ENCODE measurements at regions of chr13 and their contacts with region 1.

Region 1: DNA sequence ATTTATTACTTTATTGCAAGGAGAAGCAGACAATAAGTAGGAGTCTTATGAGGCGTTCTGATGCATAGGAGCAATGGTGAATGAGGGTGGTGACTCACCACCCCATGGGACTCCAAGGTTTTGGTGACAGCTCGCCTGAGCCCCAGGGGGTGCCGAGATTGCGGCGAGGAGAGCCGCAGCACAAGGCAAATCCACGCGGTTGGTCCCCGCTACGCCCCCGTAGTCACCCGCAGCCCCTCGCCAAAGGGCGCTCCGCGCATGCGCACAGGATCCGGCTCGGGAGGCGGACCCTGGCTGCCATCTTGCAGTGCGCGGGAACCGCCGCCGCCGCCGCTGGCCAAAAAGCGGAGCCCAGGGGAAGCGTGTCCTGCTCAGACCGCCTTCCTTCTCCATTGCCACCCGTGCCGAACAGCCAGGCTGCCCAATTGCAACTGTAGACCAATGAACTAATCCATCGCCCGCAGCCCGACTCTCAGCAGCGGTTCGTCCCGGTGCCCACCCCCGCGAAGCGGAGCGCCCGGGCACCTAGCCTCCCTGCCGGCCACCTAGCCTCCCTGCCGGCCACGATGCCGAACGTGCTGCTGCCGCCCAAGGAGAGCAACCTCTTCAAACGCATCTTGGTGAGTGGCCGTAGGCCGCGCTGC is at the start of gene NAA16:
- DNase-seq: peak; percentile 98
- ATAC-seq: peak; percentile 92
- H3K4me3 Mint-ChIP-seq: peak within 1 kb of the TSS; percentile 96
- H3K27ac Mint-ChIP-seq: peak within 1 kb of the TSS; percentile 90
- H3K4me1 Mint-ChIP-seq: peaks cover 44% of the 10 kb centered on the region
- H3K27me3 Mint-ChIP-seq: no peaks in the 10 kb centered on the region
- CTCF ChIP-seq: no peak
- total RNA-seq, gene NAA16: 18.5 and 21.4 TPM in 2 replicates

Region 2: GRCh38 chr13:39655569-39656324 is 1655.3 kb before region 1 on chr13 and contains the start of gene COG6:
- CTCF ChIA-PET with region 1: no interaction called
- POLR2A ChIA-PET with region 1: no interaction called
- intact Hi-C with region 1: loop called (anchors 10 kb)
- DNase-seq: peak; percentile 99
- ATAC-seq: peak; percentile 91
- H3K4me3 Mint-ChIP-seq: peak within 1 kb of the TSS; percentile 91
- H3K27ac Mint-ChIP-seq: peak within 1 kb of the TSS; percentile 85
- H3K4me1 Mint-ChIP-seq: peaks cover 26% of the 10 kb centered on the region
- H3K27me3 Mint-ChIP-seq: peaks cover 2% of the 10 kb centered on the region
- CTCF ChIP-seq: no peak
- total RNA-seq, gene COG6: 28.9 and 29.6 TPM in 2 replicates

Region 3: GRCh38 chr13:40922437-40923040 is 388.5 kb before region 1 on chr13:
- CTCF ChIA-PET with region 1: no interaction called
- POLR2A ChIA-PET with region 1: no interaction called
- intact Hi-C with region 1: loop called (anchors 5 kb)
- DNase-seq: no peak
- ATAC-seq: no peak
- H3K4me3 Mint-ChIP-seq: peak overlapping the region; percentile 66
- H3K27ac Mint-ChIP-seq: peak overlapping the region; percentile 69
- H3K4me1 Mint-ChIP-seq: peaks cover 24% of the 10 kb centered on the region
- H3K27me3 Mint-ChIP-seq: no peaks in the 10 kb centered on the region
- CTCF ChIP-seq: no peak

Region 4: GRCh38 chr13:41132512-41133152 is 178.5 kb before region 1 on chr13 and contains the start of gene KBTBD6:
- CTCF ChIA-PET with region 1: no interaction called
- POLR2A ChIA-PET with region 1: no interaction called
- intact Hi-C with region 1: loop called (anchors 1 kb)
- DNase-seq: peak; percentile 83
- ATAC-seq: peak; percentile 97
- H3K4me3 Mint-ChIP-seq: peak within 1 kb of the TSS; percentile 98
- H3K27ac Mint-ChIP-seq: peak within 1 kb of the TSS; percentile 91
- H3K4me1 Mint-ChIP-seq: peaks cover 47% of the 10 kb centered on the region
- H3K27me3 Mint-ChIP-seq: no peaks in the 10 kb centered on the region
- CTCF ChIP-seq: no peak
- total RNA-seq, gene KBTBD6: 5.1 and 6.0 TPM in 2 replicates

Region 5: GRCh38 chr13:41284512-41285288 is 26.4 kb before region 1 on chr13:
- CTCF ChIA-PET with region 1: no interaction called
- POLR2A ChIA-PET with region 1: interaction called, 4 read pairs
- intact Hi-C with region 1: loop called (anchors 2 kb)
- DNase-seq: no peak
- ATAC-seq: no peak
- H3K4me3 Mint-ChIP-seq: no peak overlapping the region
- H3K27ac Mint-ChIP-seq: no peak overlapping the region
- H3K4me1 Mint-ChIP-seq: peaks cover 10% of the 10 kb centered on the region
- H3K27me3 Mint-ChIP-seq: no peaks in the 10 kb centered on the region
- CTCF ChIP-seq: no peak

Region 6: DNA sequence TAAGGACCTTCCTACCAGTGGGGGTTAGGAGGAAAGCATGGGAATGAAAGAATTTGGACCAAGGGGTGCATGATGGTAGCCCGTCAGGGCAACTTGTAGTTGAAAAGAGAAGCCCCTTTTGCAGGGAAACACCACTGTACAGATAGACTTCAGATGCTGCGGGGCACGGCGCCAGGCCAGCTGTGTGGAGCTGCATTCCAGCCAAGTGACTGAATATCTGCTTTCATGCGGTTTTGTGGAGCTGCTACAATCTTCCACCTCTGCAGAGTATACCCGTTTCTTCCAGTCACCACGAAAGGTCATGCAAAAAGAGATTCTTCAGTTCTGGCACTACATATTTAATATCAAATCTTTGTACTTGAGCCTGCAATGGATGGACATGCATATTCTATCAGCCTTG is 251.0 kb after region 1 on chr13:
- CTCF ChIA-PET with region 1: no interaction called
- POLR2A ChIA-PET with region 1: no interaction called
- intact Hi-C with region 1: no loop called
- DNase-seq: no peak
- ATAC-seq: no peak
- H3K4me3 Mint-ChIP-seq: no peak overlapping the region
- H3K27ac Mint-ChIP-seq: no peak overlapping the region
- H3K4me1 Mint-ChIP-seq: no peaks in the 10 kb centered on the region
- H3K27me3 Mint-ChIP-seq: no peaks in the 10 kb centered on the region
- CTCF ChIP-seq: no peak

Region 7: GRCh38 chr13:42048682-42049453 is 737.8 kb after region 1 on chr13:
- CTCF ChIA-PET with region 1: no interaction called
- POLR2A ChIA-PET with region 1: no interaction called
- intact Hi-C with region 1: loop called (anchors 2 kb)
- DNase-seq: peak; percentile 50
- ATAC-seq: peak; percentile 76
- H3K4me3 Mint-ChIP-seq: peak overlapping the region; percentile 85
- H3K27ac Mint-ChIP-seq: no peak overlapping the region
- H3K4me1 Mint-ChIP-seq: peaks cover 12% of the 10 kb centered on the region
- H3K27me3 Mint-ChIP-seq: peaks cover 34% of the 10 kb centered on the region
- CTCF ChIP-seq: no peak

Measured in activated B cell treated with CpG ODN at 0.5 μM for 24 hours (primary cell).